ENCODE measurements at regions of chr15 and their contacts with region 1.

Region 1: DNA sequence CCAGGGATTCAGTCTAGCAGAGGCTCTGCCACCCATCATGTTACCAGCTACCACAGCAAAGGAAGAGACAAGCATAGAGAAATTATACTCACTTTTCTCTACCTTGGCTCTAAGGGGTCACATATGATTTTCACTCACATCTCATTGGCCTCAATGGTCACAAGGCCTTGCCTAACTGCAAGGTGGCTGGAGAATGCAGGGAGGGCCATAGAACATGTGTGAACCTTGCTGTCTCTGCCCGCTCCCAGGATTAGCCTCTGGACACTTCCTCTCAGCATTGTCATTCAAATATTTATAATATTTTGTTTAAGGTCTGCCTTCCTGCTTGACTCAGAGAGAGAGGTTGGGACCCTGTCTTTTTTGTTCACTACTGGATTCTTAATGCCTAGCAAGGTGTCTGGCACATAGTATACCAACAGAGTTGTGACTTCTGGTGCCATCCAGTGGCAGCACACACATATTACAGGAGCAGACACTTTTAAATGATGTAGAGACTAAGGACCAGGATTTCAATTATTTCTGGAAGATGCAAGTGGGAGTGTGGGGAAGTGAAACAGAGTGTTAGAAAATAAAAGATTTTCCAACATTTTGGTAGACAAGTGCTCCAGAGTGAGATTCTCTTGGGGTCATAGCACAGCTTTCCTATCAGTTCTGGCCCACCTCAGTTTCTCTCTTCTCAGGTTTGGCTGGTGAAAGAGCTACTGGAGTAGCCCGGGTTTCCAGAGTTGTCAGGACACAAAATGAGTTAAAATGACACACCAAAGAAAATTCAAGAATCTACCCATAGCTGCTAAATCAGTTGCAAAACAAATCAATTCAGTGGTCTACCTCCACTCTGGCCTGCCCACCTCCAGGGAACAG is 119.0 kb upstream of the RASGRP1 start:
- DNase-seq: peak; percentile 35 to 38
- ATAC-seq: peak; percentile 86 to 90
- H3K4me3 ChIP-seq: no peak overlapping the region
- H3K27ac ChIP-seq: no peak overlapping the region
- H3K4me1 ChIP-seq: no peaks in the 10 kb centered on the region
- CTCF ChIP-seq: peak; percentile 60
- EP300 ChIP-seq: no peak
- POLR2A ChIP-seq: no peak
- RAD21 ChIP-seq: peak; percentile 70 to 74

Region 2: DNA sequence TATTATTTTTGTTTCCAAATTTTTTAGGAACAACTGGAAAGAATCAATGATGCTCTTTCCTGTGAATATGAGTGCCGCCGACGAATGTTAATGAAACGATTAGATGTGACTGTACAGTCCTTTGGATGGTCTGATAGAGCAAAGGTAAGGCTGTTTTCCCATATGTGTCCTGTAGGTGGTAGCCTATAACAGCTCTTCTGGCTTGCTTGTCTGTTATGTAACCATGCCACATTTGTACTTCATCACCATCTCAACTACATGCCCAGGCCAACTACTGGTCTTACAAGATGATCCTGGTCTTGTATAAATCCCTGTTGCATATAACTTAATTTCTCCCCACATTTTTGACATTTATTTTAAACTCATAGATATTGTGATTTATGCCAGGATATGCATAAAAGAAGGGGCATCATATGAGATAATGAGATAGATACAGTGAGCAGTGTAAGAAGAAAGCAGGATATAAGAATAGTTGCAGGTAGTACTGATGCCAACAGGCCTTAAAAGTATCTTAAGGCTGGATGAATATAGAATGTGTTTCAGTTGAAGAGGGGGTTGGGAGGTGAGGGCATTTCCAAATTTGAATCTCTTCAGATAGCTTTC is 209.4 kb before region 1 on chr15:
- CTCF ChIA-PET with region 1: interaction called, 15 read pairs
- POLR2A ChIA-PET with region 1: no interaction called
- DNase-seq: peak; percentile 16 to 61
- ATAC-seq: peak; percentile 91 to 93
- H3K4me3 ChIP-seq: no peak overlapping the region
- H3K27ac ChIP-seq: no peak overlapping the region
- H3K4me1 ChIP-seq: no peaks in the 10 kb centered on the region
- CTCF ChIP-seq: peak; percentile 60
- EP300 ChIP-seq: no peak
- POLR2A ChIP-seq: no peak
- RAD21 ChIP-seq: peak; percentile 68 to 69

Region 3: DNA sequence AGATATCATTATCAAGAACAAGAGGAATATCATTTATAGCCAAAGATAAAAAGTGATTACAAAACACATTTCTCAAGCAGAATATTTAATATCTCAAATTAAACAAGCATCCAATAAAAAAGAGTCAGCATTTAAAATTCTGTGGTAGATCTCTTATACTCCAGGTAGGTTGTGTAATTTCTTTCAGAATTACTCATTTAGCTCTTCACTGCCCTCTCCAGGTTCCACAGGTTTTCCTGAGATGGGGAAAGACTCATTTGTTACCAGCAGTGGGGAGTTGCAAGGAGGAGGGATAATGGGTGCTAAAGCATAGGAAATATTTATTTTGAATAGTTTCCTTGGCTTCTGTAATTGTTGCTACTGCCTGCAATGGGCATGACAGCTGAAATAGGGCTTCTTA is 35.9 kb before region 1 on chr15:
- CTCF ChIA-PET with region 1: interaction called, 15 read pairs
- POLR2A ChIA-PET with region 1: no interaction called
- DNase-seq: peak; percentile 20
- ATAC-seq: peak; percentile 68 to 76; a peak in 3 of 6 replicates
- H3K4me3 ChIP-seq: no peak overlapping the region
- H3K27ac ChIP-seq: no peak overlapping the region
- H3K4me1 ChIP-seq: no peaks in the 10 kb centered on the region
- CTCF ChIP-seq: peak; percentile 40
- EP300 ChIP-seq: no peak
- POLR2A ChIP-seq: no peak
- RAD21 ChIP-seq: peak; percentile 36 to 37; a peak in 3 of 5 replicates

Region 4: DNA sequence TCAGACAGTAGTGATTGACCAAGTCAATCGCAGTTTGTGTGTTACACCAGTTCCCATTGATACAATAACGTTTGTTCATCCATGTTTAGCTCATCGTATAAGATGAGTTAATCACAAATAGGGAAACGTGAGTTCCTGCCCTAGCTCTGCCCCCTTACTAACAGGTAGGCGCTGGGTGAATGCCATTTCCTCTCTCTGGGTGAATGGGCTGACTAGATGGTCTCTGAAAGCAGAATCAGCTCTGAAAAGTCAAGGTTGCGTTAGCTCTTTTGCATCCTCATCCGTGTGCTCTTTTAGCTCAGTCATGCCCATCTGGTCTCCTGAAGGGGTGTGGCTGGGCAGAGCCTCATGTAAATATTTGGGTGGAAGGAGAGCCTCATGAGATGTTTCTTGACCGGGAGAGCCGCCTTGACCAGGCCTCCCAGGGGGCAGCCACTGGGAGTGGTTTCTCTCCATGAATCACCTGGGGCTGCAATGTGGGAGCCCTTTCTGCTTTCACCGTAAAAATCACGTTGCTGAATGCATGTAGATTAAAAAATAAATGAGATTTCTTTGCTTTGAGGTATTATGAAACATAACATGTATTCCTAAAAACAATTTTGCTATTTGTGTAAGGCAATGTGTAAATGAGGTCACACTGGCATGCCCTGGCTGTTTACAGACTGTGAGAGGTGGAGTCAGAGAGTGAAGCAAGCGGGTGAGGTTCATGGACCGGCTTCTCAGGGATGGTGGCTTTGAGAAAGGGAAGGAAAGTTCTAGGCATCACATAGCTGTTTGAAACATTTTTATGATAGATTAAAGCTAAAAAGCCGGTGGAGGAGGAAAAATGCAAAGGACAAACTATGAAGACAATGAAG is 10.6 kb before region 1 on chr15:
- CTCF ChIA-PET with region 1: interaction called, 24 read pairs
- POLR2A ChIA-PET with region 1: no interaction called
- DNase-seq: peak in 1 of 2 experiments; percentile 5
- ATAC-seq: no peak
- H3K4me3 ChIP-seq: no peak overlapping the region
- H3K27ac ChIP-seq: no peak overlapping the region
- H3K4me1 ChIP-seq: no peaks in the 10 kb centered on the region
- CTCF ChIP-seq: no peak
- EP300 ChIP-seq: no peak
- POLR2A ChIP-seq: no peak
- RAD21 ChIP-seq: no peak

Region 5: DNA sequence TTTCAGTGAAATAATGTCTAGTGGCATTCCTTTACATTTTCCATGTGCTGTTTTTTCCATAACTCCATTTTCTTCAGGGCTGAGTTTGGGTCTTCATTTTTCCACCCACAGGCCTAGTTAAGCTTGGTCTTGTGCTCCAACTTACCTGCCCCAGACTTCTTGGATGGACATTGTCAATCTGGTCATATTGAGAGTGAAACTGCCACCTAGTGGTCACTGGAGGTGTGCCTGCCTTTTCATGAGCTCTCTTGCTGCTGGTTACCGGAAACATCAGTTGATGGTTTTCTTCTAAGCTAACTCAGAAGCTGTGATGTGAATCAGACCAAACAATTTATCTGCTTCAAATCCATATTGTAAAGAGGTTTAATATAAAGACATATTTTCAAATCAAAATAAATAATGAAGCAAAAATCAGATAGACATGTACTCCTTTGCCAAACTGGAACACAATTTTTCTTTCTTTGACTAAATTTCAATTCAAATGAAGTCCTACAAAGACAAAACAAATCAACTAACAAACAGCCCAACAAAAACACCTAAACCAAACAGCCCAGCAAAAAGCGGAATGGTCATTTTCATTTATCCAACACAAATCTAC is 16.1 kb after region 1 on chr15:
- CTCF ChIA-PET with region 1: interaction called, 50 read pairs
- POLR2A ChIA-PET with region 1: no interaction called
- DNase-seq: peak; percentile 50 to 61
- ATAC-seq: peak; percentile 68 to 80; a peak in 3 of 6 replicates
- H3K4me3 ChIP-seq: no peak overlapping the region
- H3K27ac ChIP-seq: no peak overlapping the region
- H3K4me1 ChIP-seq: peaks cover 9% of the 10 kb centered on the region; the same call in 2 of the 3 replicates
- CTCF ChIP-seq: peak; percentile 53
- EP300 ChIP-seq: no peak
- POLR2A ChIP-seq: no peak
- RAD21 ChIP-seq: peak; percentile 51 to 54; a peak in 4 of 5 replicates